Heart left ventricle (tissue), 16 donors: ENCODE measurements at regions of chr7 and their contacts with region 1.

Region 1: GRCh38 chr7:113118074-113118959 is at the start of gene SMIM30:
- DNase-seq: peak; percentile 94 to 96 (median 95)
- ATAC-seq: peak; percentile 100
- H3K4me3 ChIP-seq: peak within 1 kb of the TSS; percentile 33 to 79 (median 66)
- H3K27ac ChIP-seq: peak within 1 kb of the TSS; percentile 69 to 91 (median 80)
- H3K4me1 ChIP-seq: peaks cover 0 to 30% (median 9%) of the 10 kb centered on the region in 12 donors
- H3K27me3 ChIP-seq: no peaks in the 10 kb centered on the region
- CTCF ChIP-seq: no peak
- POLR2A ChIP-seq: peak; percentile 50 to 96
- total RNA-seq, gene SMIM30: 72.4 to 180 (median 137) TPM

Region 2: DNA sequence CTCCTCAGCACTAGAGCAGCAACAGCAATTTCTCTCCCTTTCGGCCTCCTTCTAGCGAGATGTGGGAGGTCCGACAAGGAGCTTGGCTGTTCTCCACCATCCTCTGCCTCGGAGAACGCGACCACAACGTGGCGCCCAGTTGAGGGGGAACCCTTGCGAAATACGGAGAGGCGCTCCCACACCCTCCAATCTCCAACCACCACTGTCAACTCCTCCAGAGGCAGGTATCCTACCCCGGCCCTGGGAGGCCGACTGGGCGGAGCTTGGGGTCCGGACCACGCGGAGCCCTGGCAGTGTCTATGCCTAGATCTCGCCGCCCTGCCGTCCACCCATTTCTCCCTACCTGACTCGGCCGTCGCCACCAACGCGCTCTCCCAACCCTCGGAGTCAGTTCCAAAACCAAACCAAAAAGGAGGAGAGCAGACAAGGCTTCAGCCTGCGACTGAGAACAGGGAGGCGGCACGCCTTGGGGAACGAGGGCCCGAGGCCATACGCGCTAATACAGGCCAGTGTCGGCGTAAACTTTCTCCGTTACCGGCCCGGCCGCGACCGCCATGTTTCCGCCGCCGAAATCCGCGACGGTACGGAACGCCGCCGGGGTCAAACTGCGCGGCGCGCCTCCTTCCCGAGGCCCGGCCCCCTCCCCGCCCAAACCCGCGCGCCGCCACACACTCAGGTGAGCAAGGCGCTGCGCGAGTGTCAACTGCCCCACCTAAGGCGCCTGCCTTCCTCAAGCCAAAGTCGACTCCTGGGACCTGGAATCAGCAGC is 328.3 kb before region 1 on chr7 and contains the start of gene TMEM168:
- intact Hi-C with region 1: loop called in 4 of 10 experiments (anchors 5 to 10 kb)
- DNase-seq: peak; percentile 83 to 93 (median 86)
- ATAC-seq: peak; percentile 67 to 94 (median 93)
- H3K4me3 ChIP-seq: peak within 1 kb of the TSS; percentile 73 to 95 (median 83)
- H3K27ac ChIP-seq: peak within 1 kb of the TSS; percentile 69 to 96 (median 89)
- H3K4me1 ChIP-seq: peaks cover 0 to 21% (median 13%) of the 10 kb centered on the region in 12 donors
- H3K27me3 ChIP-seq: no peaks in the 10 kb centered on the region
- CTCF ChIP-seq: peak in 4 of 12 donors; percentile 11 to 24 (median 16)
- POLR2A ChIP-seq: peak in 1 of 2 donors; percentile 34
- total RNA-seq, gene TMEM168: 15.6 to 23.3 (median 18.1) TPM

Region 3: DNA sequence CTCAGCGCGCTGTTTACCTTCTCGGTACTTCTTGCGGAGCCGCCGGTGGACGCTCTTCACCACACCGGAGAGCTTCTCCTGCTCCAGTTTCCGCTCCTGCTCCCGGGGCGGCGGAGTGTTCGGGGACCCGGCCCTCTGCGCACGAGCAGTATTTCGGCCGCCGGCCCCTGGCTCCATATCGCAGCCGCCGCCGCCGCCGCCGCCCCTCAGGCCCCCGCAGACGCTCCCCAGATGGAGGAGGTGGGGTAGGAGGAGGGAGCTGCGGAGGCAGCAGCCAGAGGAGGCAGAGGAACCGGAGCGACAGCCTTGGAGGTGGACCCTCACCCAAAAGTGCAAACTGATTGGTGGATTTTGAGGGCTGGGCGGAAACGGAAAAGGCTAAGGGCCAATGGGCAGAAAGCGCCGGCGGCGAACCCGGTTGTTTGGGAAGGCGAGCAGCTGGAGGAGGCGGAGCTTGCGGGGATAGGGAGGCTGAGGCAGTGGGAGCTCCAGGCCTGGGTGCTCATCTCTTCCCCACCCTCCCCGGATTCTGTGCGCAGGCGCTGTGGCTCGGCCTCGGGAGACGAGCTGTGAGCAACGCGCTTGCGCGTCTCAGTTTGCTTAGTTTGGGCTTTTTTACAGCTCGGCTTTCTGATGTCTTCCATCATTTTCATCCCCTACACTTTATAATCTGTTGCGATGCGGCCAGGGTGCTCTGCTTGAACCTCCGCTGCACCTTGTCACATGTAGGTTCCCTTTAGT is 178.6 kb before region 1 on chr7:
- intact Hi-C with region 1: loop called in 7 of 10 experiments (anchors 5 to 10 kb)
- DNase-seq: peak; percentile 99 to 100 (median 99)
- ATAC-seq: peak; percentile 98 to 99 (median 99)
- H3K4me3 ChIP-seq: peak overlapping the region; percentile 64 to 92 (median 82)
- H3K27ac ChIP-seq: peak overlapping the region; percentile 47 to 90 (median 85)
- H3K4me1 ChIP-seq: peaks cover 5 to 41% (median 24%) of the 10 kb centered on the region in 12 donors
- H3K27me3 ChIP-seq: no peaks in the 10 kb centered on the region
- CTCF ChIP-seq: peak in 1 of 12 donors; percentile 9
- POLR2A ChIP-seq: peak in 1 of 2 donors; percentile 79